Heart left ventricle (tissue), 16 donors: ENCODE measurements at regions of chr16 and their contacts with region 1.

Region 1: GRCh38 chr16:74623214-74623842 is 16.4 kb upstream of the GLG1 start:
- DNase-seq: no peak
- ATAC-seq: peak; percentile 30 to 59 (median 58)
- H3K4me3 ChIP-seq: no peak overlapping the region
- H3K27ac ChIP-seq: no peak overlapping the region
- H3K4me1 ChIP-seq: peaks cover 0 to 22% (median 11%) of the 10 kb centered on the region in 12 donors
- H3K27me3 ChIP-seq: no peaks in the 10 kb centered on the region
- CTCF ChIP-seq: peak; percentile 53 to 77 (median 64)
- POLR2A ChIP-seq: no peak

Region 2: GRCh38 chr16:74309789-74310781 is 313.2 kb before region 1 on chr16:
- intact Hi-C with region 1: loop called in 1 of 10 experiments (anchors 10 kb)
- DNase-seq: no peak
- ATAC-seq: peak in 2 of 4 donors; percentile 43 to 44
- H3K4me3 ChIP-seq: no peak overlapping the region
- H3K27ac ChIP-seq: no peak overlapping the region
- H3K4me1 ChIP-seq: peaks cover 0 to 18% (median 9%) of the 10 kb centered on the region in 12 donors
- H3K27me3 ChIP-seq: no peaks in the 10 kb centered on the region
- CTCF ChIP-seq: peak; percentile 51 to 83 (median 70)
- POLR2A ChIP-seq: no peak

Region 3: DNA sequence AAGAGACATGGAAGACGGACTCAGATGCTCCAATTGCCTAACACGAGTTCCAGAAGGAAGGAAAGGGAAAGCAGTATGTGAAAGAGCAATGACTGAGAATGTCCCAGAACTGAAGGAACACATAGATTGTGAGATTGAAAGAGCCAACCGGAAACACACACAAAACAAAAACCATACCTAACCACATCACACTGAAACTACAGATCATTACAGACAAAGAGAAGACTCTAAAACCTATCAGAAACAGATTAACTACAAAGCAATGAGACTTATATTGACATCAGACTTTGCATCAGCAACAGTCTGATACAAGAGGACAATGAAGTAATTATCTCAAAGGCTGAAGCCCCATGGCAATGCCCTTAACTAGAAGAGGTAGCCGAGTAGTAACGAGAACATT is 156.5 kb before region 1 on chr16:
- intact Hi-C with region 1: loop called in 2 of 10 experiments (anchors 5 to 10 kb)
- DNase-seq: no peak
- ATAC-seq: no peak
- H3K4me3 ChIP-seq: no peak overlapping the region
- H3K27ac ChIP-seq: peak overlapping the region in 2 of 12 donors; percentile 1 to 22
- H3K4me1 ChIP-seq: peaks cover 0 to 13% (median 0%) of the 10 kb centered on the region in 12 donors
- H3K27me3 ChIP-seq: no peaks in the 10 kb centered on the region
- CTCF ChIP-seq: no peak
- POLR2A ChIP-seq: no peak

Region 4: GRCh38 chr16:74480141-74481029 is 142.9 kb before region 1 on chr16:
- intact Hi-C with region 1: loop called in 4 of 10 experiments (anchors 5 to 10 kb)
- DNase-seq: peak in 3 of 5 donors; percentile 13 to 36 (median 19)
- ATAC-seq: peak in 3 of 4 donors; percentile 66 to 76 (median 68)
- H3K4me3 ChIP-seq: no peak overlapping the region
- H3K27ac ChIP-seq: peak overlapping the region in 4 of 12 donors; percentile 9 to 33 (median 20)
- H3K4me1 ChIP-seq: peaks cover 0 to 19% (median 0%) of the 10 kb centered on the region in 12 donors
- H3K27me3 ChIP-seq: no peaks in the 10 kb centered on the region
- CTCF ChIP-seq: no peak
- POLR2A ChIP-seq: no peak

Region 5: GRCh38 chr16:74485941-74486340 is 137.4 kb before region 1 on chr16:
- intact Hi-C with region 1: loop called in 4 of 10 experiments (anchors 5 to 10 kb)
- DNase-seq: no peak
- ATAC-seq: no peak
- H3K4me3 ChIP-seq: no peak overlapping the region
- H3K27ac ChIP-seq: no peak overlapping the region
- H3K4me1 ChIP-seq: peaks cover 0 to 2% (median 0%) of the 10 kb centered on the region in 12 donors
- H3K27me3 ChIP-seq: no peaks in the 10 kb centered on the region
- CTCF ChIP-seq: no peak
- POLR2A ChIP-seq: no peak

Region 6: DNA sequence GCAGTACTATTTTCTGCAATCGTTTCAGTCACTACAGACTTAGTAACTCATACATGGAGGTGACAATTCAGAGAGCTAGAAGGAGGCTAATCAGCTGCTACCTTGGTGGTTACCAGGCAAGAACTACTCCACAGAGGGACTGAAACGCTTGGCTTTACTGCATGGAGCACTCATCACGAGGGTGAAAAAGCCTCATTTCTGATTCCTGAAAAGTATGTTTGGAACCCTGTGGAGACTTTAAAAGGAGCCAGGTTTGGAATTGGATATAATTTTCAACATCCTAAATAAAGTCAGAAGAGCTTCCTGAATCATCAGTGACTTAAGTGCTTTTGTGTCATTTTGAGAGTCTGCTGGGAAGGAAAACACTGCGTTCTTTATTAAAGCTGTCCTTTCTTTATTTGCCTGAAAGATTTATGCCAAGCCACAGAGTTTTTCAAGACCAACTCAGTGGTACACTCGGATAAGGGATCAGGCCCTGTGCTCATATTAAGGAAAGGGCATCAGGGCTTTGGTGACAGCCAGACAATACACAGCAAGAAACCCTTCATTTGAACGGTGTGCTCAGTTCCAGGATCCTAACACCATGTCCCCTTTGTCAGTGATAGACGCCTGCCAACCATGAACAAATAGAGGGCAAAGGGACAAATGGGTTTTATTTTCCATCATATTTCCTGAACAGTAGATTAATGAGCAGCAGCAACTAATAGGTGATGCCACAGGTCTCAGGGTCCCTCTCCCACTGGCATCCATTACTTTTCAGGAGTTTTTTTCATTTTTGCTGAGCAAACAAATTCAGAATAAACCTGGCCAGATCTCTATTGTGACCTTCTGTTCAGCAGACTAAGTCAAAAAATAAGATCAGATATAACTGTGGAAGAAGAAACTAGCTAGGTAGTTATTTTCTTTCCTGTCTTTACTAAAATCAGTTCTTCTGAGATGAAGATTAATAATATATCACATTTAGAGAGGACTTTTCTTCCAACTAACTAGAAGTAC is 121.5 kb before region 1 on chr16:
- intact Hi-C with region 1: loop called in 1 of 10 experiments (anchors 5 kb)
- DNase-seq: no peak
- ATAC-seq: peak; percentile 90 to 97 (median 94)
- H3K4me3 ChIP-seq: no peak overlapping the region
- H3K27ac ChIP-seq: peak overlapping the region; percentile 2 to 76 (median 64)
- H3K4me1 ChIP-seq: peaks cover 0 to 23% (median 6%) of the 10 kb centered on the region in 12 donors
- H3K27me3 ChIP-seq: no peaks in the 10 kb centered on the region
- CTCF ChIP-seq: no peak
- POLR2A ChIP-seq: no peak

Region 7: GRCh38 chr16:74837056-74837455 is 213.7 kb after region 1 on chr16:
- intact Hi-C with region 1: no loop called
- DNase-seq: no peak
- ATAC-seq: no peak
- H3K4me3 ChIP-seq: no peak overlapping the region
- H3K27ac ChIP-seq: no peak overlapping the region
- H3K4me1 ChIP-seq: no peaks in the 10 kb centered on the region
- H3K27me3 ChIP-seq: no peaks in the 10 kb centered on the region
- CTCF ChIP-seq: no peak
- POLR2A ChIP-seq: no peak